ENCODE measurements at regions of chr2 and their contacts with region 1.

Region 1: GRCh38 chr2:224039124-224039940 is at the start of gene SERPINE2:
- DNase-seq: peak; percentile 75
- ATAC-seq: peak; percentile 73
- H3K4me3 Mint-ChIP-seq: peak within 1 kb of the TSS; percentile 83
- H3K27ac Mint-ChIP-seq: peak within 1 kb of the TSS; percentile 40
- H3K4me1 Mint-ChIP-seq: peaks cover 15% of the 10 kb centered on the region
- H3K27me3 Mint-ChIP-seq: peaks cover 51% of the 10 kb centered on the region
- total RNA-seq, gene SERPINE2: 30.9 to 46.6 TPM

Region 2: DNA sequence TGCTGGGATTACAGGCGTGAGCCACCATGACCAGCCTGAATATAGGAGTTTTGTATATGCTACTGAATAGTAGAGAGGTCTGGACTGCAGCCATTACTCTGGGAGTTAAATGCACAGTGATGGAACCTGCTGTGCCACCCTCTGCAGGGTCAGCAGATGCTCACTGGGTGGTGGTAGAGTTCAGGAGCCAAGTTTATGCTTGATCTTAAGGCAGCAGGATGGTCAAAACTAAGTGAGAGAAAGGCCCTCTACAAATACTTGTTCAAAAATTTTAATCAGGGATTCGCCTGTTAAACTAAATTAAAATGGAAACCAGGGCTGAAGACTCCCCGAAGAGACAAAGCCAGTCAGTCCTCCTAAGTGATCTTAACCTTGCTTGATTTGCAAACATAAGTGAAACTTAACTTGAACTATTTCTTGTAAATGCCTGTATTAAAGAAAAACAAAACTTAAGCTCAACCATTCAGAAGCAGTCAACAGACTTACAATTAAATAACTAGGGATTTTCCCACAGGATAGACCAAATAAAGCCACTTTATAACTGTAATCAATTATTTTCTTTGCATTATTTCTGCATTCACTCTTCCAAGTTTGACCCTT is 90.0 kb before region 1 on chr2:
- CTCF ChIA-PET with region 1: no interaction called
- POLR2A ChIA-PET with region 1: no interaction called
- intact Hi-C with region 1: no loop called
- DNase-seq: peak; percentile 35
- ATAC-seq: peak; percentile 18
- H3K4me3 Mint-ChIP-seq: no peak overlapping the region
- H3K27ac Mint-ChIP-seq: peak overlapping the region; percentile 87
- H3K4me1 Mint-ChIP-seq: peaks cover 66% of the 10 kb centered on the region
- H3K27me3 Mint-ChIP-seq: no peaks in the 10 kb centered on the region

Region 3: DNA sequence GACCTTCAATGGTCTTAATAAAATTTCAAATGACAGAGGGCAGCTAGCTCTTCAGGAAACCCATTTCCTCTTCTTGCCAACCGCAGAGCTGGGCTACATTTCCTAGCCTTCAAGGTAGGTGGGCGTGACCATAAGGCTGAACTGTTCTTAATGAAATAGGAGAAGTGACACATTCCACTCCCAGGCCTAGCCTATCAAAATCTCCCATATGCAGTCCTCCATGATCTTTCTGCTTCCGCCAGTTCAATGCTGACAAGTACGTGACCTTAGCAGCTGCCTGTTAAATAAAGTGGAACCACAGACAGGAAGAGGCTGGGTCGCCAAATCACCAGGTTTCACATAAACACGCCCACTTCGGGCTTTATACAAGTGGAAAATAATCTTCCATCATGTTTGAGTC is 13.5 kb before region 1 on chr2:
- CTCF ChIA-PET with region 1: interaction called, 7 read pairs
- POLR2A ChIA-PET with region 1: no interaction called
- intact Hi-C with region 1: loop called in 1 of 2 experiments (anchors 1 kb)
- DNase-seq: peak; percentile 81
- ATAC-seq: peak; percentile 94
- H3K4me3 Mint-ChIP-seq: peak overlapping the region; percentile 50
- H3K27ac Mint-ChIP-seq: peak overlapping the region; percentile 94
- H3K4me1 Mint-ChIP-seq: peaks cover 72% of the 10 kb centered on the region
- H3K27me3 Mint-ChIP-seq: no peaks in the 10 kb centered on the region